MCF 10A (cell line): ENCODE measurements at regions of chr6 and their contacts with region 1.

Region 1: GRCh38 chr6:164927288-164928056 is 381.9 kb downstream of the C6orf118 start:
- DNase-seq: peak; percentile 62
- H3K4me3 Mint-ChIP-seq: no peak overlapping the region
- H3K27ac Mint-ChIP-seq: no peak overlapping the region
- H3K4me1 Mint-ChIP-seq: no peaks in the 10 kb centered on the region
- H3K27me3 Mint-ChIP-seq: no peaks in the 10 kb centered on the region
- CTCF ChIP-seq: peak; percentile 95

Region 2: GRCh38 chr6:163427498-163428254 is 1499.8 kb before region 1 on chr6:
- CTCF ChIA-PET with region 1: interaction called, 30 read pairs
- POLR2A ChIA-PET with region 1: interaction called, 9 read pairs
- intact Hi-C with region 1: loop called (anchors 1 kb)
- DNase-seq: peak; percentile 81
- H3K4me3 Mint-ChIP-seq: peak overlapping the region; percentile 43
- H3K27ac Mint-ChIP-seq: peak overlapping the region; percentile 17
- H3K4me1 Mint-ChIP-seq: peaks cover 48% of the 10 kb centered on the region
- H3K27me3 Mint-ChIP-seq: no peaks in the 10 kb centered on the region
- CTCF ChIP-seq: peak; percentile 50

Region 3: GRCh38 chr6:164106345-164106769 is 821.1 kb before region 1 on chr6:
- CTCF ChIA-PET with region 1: interaction called, 3 read pairs
- POLR2A ChIA-PET with region 1: no interaction called
- intact Hi-C with region 1: loop called (anchors 2 kb)
- DNase-seq: peak; percentile 37
- H3K4me3 Mint-ChIP-seq: no peak overlapping the region
- H3K27ac Mint-ChIP-seq: peak overlapping the region; percentile 97
- H3K4me1 Mint-ChIP-seq: peaks cover 43% of the 10 kb centered on the region
- H3K27me3 Mint-ChIP-seq: no peaks in the 10 kb centered on the region
- CTCF ChIP-seq: no peak

Region 4: GRCh38 chr6:164942271-164942765 is 14.8 kb after region 1 on chr6:
- CTCF ChIA-PET with region 1: interaction called, 13 read pairs
- POLR2A ChIA-PET with region 1: no interaction called
- intact Hi-C with region 1: no loop called
- DNase-seq: no peak
- H3K4me3 Mint-ChIP-seq: no peak overlapping the region
- H3K27ac Mint-ChIP-seq: no peak overlapping the region
- H3K4me1 Mint-ChIP-seq: no peaks in the 10 kb centered on the region
- H3K27me3 Mint-ChIP-seq: no peaks in the 10 kb centered on the region
- CTCF ChIP-seq: no peak

Region 5: GRCh38 chr6:165245287-165245686 is 317.8 kb after region 1 on chr6:
- CTCF ChIA-PET with region 1: interaction called, 16 read pairs
- POLR2A ChIA-PET with region 1: no interaction called
- intact Hi-C with region 1: loop called (anchors 2 kb)
- DNase-seq: peak; percentile 55
- H3K4me3 Mint-ChIP-seq: no peak overlapping the region
- H3K27ac Mint-ChIP-seq: peak overlapping the region; percentile 20
- H3K4me1 Mint-ChIP-seq: peaks cover 6% of the 10 kb centered on the region
- H3K27me3 Mint-ChIP-seq: no peaks in the 10 kb centered on the region
- CTCF ChIP-seq: peak; percentile 50